GM13977 (cell line): ENCODE measurements at regions of chr16 and their contacts with region 1.

Region 1: GRCh38 chr16:85821441-85822135 is 22.1 kb downstream of the COX4I1 start:
- DNase-seq: peak; percentile 92
- CTCF ChIP-seq: peak; percentile 97

Region 2: DNA sequence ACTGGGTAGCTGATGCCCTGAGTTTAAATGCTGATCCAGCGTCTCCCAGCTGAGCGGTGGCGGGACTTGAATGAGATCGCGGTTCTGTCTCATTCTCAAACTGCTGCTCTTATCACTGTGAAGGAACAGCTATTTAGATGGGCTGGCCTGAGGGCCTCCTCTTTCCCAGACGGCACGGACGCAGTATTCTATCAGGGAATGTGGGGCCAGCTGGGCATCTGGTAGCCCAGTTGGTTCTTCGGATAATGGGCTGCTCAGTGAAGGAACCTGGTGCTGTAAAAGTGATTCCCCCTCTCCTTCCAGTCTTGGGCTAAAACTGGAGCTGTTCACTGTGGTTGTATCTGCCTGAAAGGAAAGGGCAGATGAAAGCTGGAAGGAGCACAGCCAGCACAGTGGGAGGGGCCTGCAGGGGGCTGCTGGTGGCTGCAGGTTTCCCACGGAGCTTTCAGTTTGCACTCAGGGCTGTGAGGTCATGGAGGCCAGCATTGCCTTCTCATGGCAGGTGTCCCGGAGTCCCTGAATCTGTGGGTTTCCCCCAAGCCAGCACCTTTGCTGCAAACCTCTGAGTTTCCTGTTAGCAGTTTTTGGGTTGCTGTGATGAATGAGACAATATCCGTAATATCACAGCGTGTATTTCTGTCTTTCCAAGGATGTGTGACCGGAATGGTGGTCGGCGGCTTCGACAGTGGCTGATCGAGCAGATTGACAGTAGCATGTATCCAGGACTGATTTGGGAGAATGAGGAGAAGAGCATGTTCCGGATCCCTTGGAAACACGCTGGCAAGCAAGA is 81.0 kb after region 1 on chr16:
- in situ Hi-C with region 1: loop called (anchors 5 kb)
- DNase-seq: peak; percentile 85
- CTCF ChIP-seq: peak; percentile 2

Region 3: DNA sequence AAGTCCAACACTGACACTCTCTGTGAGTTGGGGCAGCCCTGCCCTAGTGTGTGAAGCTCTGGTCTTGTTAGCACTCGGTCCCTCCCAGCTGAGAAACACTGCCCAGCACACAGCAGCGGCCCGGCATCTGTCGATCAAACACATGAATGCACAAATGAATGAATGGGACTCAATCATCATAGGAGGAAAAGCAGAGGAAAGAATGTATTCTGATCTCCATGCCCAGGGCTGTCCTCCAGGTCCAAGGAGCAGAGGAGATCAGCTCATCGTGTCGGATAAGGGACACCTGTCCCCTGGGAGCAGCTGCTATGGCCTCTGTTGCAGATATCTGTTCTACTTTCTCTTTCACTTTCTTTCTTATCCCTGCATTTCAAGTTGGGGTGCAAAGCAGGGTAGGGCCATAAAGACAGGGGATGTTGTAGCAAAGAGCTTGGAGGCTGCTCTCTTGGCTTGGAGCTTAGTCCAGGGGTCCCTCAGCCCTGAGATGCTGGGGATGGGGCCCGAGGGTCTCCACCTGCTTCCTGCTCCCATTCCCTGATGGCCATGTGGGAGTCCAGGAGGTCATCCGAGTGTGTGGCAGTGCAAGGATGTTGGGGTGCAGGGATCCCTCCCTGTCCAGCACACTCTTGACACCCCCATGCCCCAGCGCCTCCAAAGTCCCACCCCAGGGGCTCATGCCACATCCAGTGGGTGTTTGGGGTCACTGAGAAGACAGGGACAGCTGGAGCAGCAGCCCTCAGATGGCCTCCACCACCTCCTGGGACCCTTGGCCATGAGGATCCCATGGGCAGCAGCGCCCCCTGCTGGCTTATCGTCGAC is 165.6 kb after region 1 on chr16:
- in situ Hi-C with region 1: loop called (anchors 5 kb)
- DNase-seq: peak; percentile 71
- CTCF ChIP-seq: peak; percentile 39

Region 4: DNA sequence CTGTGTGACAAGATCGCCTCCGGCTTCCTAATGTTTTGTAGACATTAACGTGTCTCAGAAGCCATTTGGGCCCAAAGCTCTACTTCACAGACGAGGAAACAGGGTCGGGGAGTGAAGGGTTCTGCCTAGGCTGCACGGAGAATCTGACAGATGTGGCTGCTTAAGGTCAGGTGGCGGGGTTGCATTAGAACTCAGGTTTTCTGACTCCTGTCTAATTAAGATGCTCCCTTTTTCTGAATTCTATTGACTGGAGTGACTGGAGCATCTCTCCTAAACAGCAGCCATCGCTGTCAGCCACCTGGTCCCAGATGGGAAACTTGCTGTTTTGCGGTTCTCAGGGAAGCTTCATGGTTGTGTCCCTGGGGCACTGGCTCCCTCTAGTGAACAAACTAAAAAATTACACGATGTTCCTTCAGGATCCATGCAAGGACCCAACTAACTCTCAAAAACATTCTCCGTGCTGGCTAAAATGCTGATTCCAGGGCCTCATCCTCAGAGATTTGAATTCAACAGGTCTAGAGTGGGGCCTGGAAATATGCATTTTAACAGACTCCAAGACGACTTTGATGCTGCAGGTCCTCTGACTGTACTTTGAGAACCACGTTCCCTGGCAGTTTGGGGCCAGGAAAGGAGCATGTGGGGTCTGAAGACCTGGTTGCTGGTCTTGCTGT is 194.7 kb after region 1 on chr16:
- in situ Hi-C with region 1: loop called (anchors 5 kb)
- DNase-seq: peak; percentile 72
- CTCF ChIP-seq: peak; percentile 71